ENCODE measurements at regions of chr14 and their contacts with region 1.

Region 1: GRCh38 chr14:52552063-52552988 is at the starts of genes GPR137C and TXNDC16:
- DNase-seq: peak; percentile 100
- H3K4me3 ChIP-seq: peak within 1 kb of the TSS; percentile 75 to 82
- H3K27ac ChIP-seq: peak within 1 kb of the TSS; percentile 92
- H3K4me1 ChIP-seq: peaks cover 20% of the 10 kb centered on the region
- H3K27me3 ChIP-seq: no peaks in the 10 kb centered on the region
- CTCF ChIP-seq: no peak
- POLR2A ChIP-seq: peak; percentile 58 to 92
- total RNA-seq, gene GPR137C: 0.74 TPM
- total RNA-seq, gene TXNDC16: 5.9 TPM

Region 2: DNA sequence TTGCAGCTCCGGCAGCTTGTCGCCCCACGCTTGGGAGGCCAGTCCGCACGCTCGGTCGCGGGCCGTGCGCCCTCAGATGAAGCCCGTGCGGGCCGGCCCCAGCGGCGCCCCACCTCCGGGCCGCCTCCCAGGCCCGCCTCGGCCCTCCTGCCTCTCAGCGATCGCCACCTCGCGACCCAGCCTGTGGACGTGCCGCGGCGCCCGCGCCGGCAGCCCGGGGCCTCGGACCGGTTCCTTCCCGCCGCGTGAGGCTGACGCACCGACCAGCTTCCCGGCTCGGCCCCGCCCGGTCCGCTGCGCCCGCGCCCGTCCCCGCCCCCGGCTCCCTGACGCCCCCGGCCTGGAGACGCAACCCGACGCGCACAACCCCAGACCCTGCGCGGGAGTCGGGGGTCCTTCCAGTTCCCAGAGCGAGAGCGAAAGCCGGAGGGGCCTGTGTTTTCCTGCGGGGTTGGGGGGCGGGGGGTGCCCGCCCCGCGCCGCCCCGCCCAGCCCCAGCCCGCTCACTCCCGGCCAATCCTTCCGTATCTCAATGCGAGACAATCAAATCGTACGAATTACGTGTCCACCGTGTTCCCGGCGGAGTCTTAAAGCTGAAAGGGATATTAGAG is 143.3 kb after region 1 on chr14 and contains the start of gene ERO1A:
- intact Hi-C with region 1: loop called (anchors 10 kb)
- DNase-seq: no peak
- H3K4me3 ChIP-seq: peak within 1 kb of the TSS; percentile 84 to 98
- H3K27ac ChIP-seq: peak within 1 kb of the TSS; percentile 98
- H3K4me1 ChIP-seq: peaks cover 38% of the 10 kb centered on the region
- H3K27me3 ChIP-seq: no peaks in the 10 kb centered on the region
- CTCF ChIP-seq: no peak
- POLR2A ChIP-seq: peak in 1 of 2 donors; percentile 55
- total RNA-seq, gene ERO1A: 50.6 TPM